ENCODE measurements at regions of chr2 and their contacts with region 1.

Region 1: GRCh38 chr2:167651406-167652151 is 595.8 kb downstream of the STK39 start:
- DNase-seq: no peak
- H3K4me3 ChIP-seq: no peak overlapping the region
- H3K27ac ChIP-seq: no peak overlapping the region
- H3K4me1 ChIP-seq: no peaks in the 10 kb centered on the region
- H3K27me3 ChIP-seq: no peaks in the 10 kb centered on the region
- CTCF ChIP-seq: no peak

Region 2: DNA sequence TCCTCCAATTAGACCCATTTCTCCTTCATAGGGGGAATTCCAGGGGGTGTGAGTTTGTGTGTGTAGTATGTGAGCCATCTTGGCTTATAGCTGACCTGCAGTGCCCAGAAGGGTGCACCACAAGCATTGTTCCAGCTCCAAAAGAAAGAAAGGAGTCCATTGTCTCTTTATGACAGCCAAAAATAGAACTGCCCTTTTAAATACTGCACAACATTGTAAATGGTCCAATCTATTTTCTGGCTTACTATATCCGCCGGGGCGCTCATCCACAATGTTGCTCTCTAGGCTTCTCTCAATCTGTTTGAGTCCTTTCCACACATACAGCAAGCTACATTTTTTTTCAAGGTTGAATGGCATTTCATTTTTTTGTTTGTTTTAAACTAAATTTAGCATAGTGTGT is 78.3 kb after region 1 on chr2:
- dilution Hi-C with region 1: loop called (anchors 10 kb)
- DNase-seq: no peak
- H3K4me3 ChIP-seq: no peak overlapping the region
- H3K27ac ChIP-seq: no peak overlapping the region
- H3K4me1 ChIP-seq: no peaks in the 10 kb centered on the region
- H3K27me3 ChIP-seq: no peaks in the 10 kb centered on the region
- CTCF ChIP-seq: no peak

Measured in keratinocyte (primary cell).